ENCODE measurements at regions of chr10 and their contacts with region 1.

Region 1: DNA sequence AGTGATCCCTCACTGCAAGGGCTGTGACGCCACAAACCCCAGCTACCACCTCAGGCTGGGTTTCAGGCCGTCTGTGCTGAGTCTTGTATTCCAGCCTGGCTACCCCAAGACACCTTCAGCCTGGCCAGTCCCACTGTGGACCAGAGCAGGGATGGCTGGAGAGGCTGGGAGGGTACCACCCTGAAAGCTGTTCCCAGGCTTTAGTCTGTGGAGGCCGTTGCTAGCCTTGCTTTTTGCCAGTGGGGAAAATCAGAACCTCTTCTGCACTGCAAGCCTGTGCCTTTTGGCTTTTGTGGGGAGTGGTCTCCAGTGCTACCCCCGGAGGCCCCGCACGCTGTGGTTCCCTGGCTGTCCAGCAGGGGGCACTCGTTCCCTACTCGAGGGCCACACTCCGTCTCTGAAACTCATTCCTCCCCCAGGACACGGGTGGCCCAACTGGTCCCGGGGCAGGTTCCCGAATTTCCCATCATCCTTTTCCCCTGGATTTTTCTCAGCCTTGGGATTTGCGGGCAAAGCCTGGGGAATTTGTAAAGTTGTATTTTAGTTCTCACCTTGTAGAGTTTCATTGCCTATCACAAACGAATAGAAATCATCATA is 128.4 kb upstream of the BTBD16 start:
- DNase-seq: peak; percentile 43
- H3K4me3 ChIP-seq: no peak overlapping the region
- H3K27ac ChIP-seq: peak overlapping the region; percentile 99
- H3K4me1 ChIP-seq: peaks cover 45% of the 10 kb centered on the region
- H3K27me3 ChIP-seq: no peaks in the 10 kb centered on the region
- CTCF ChIP-seq: peak; percentile 87 to 97
- POLR2A ChIP-seq: no peak

Region 2: GRCh38 chr10:121527666-121528065 is 615.1 kb before region 1 on chr10:
- CTCF ChIA-PET with region 1: no interaction called
- POLR2A ChIA-PET with region 1: no interaction called
- dilution Hi-C with region 1: no loop called
- intact Hi-C with region 1: no loop called
- DNase-seq: no peak
- H3K4me3 ChIP-seq: no peak overlapping the region
- H3K27ac ChIP-seq: no peak overlapping the region
- H3K4me1 ChIP-seq: no peaks in the 10 kb centered on the region
- H3K27me3 ChIP-seq: no peaks in the 10 kb centered on the region
- CTCF ChIP-seq: no peak
- POLR2A ChIP-seq: no peak

Region 3: DNA sequence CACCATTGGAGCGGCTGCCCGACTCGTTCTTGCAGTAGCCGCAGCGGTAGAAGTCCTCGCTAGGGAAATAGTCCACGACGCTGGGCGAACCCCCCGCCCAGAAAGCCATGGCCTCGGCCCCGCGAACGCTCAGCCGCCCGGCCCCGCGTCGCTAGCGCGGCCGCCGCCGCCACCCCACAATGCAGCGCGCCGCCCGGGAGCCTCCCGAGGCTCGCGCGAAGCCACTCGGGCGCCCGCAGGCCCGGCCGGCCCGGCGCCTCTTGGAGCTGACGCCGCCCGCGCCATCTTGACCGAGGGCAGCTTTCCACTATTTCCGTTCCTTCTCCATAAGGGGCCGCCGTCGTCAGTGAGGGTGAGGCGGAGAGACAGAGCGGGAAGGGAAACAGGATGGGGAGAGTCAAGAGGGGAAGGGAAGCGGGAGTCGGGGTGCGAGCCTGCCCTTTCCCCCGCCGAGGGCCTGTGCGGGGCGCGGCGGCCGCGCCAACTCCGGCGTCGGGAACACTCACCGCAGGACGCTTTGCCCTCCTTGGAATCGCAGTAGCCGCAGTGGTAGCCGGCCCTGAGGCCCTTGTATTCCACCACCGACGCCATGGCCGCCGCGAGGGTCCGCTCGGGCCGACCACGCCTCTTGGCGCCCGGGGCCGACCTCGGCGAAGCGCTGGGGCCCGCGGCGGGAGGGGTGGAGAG is 214.8 kb before region 1 on chr10 and contains the start of gene ATE1:
- CTCF ChIA-PET with region 1: no interaction called
- POLR2A ChIA-PET with region 1: no interaction called
- dilution Hi-C with region 1: no loop called
- intact Hi-C with region 1: loop called (anchors 1 kb)
- DNase-seq: peak; percentile 94
- H3K4me3 ChIP-seq: peak within 1 kb of the TSS; percentile 61 to 97 (median 93)
- H3K27ac ChIP-seq: peak within 1 kb of the TSS; percentile 91
- H3K4me1 ChIP-seq: peaks cover 11% of the 10 kb centered on the region
- H3K27me3 ChIP-seq: no peaks in the 10 kb centered on the region
- CTCF ChIP-seq: no peak
- POLR2A ChIP-seq: peak; percentile 83
- total RNA-seq, gene ATE1: 19.1 and 27.1 TPM in 2 replicates

Region 4: DNA sequence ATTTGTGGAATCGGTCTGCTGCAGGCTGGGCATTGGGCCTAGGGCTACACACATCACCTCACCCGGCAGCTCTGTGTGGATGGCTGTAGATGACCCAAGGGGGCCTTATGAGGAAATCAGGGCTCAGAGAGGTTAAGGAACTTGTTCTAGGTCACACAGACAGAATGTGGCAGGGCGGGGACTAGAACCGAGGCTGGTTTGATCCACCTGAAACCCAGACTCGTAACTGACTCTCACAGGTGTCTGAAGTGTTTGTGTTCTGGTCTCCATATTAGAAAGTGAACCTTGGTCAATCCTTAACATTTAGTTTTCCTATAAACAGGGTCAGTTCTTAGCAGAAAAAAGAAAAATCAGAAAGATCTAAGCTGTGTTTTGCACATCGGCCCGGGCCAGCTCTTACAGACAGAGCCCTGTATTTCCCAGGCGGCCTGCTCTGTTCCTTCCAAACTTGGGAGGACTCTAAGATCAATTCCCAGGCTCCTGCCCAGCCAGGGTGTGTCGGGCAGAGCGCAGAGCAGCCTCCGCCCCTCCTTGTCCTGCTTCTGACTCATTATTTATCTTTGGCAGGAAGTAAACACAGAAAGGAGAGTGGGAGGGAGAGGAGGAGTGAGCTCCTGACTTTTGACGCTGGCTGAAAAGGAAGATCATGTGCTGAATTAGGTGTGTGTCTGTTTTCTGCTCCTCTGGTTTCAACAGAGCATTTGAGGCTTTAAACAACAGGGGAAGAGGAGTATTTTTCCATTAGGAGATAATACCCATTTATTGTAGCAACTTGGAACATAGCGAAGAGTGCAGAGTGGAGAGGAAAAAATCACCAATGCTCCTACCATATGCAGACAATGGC is 79.7 kb before region 1 on chr10:
- CTCF ChIA-PET with region 1: interaction called, 6 read pairs
- POLR2A ChIA-PET with region 1: no interaction called
- dilution Hi-C with region 1: no loop called
- intact Hi-C with region 1: loop called (anchors 2 kb)
- DNase-seq: peak; percentile 90
- H3K4me3 ChIP-seq: no peak overlapping the region
- H3K27ac ChIP-seq: peak overlapping the region; percentile 14
- H3K4me1 ChIP-seq: peaks cover 8% of the 10 kb centered on the region
- H3K27me3 ChIP-seq: no peaks in the 10 kb centered on the region
- CTCF ChIP-seq: no peak
- POLR2A ChIP-seq: no peak

Region 5: GRCh38 chr10:122163174-122164022 is 20.7 kb after region 1 on chr10:
- CTCF ChIA-PET with region 1: interaction called, 21 read pairs
- POLR2A ChIA-PET with region 1: no interaction called
- dilution Hi-C with region 1: no loop called
- intact Hi-C with region 1: no loop called
- DNase-seq: peak; percentile 49
- H3K4me3 ChIP-seq: peak overlapping the region; percentile 22 to 57 (median 43)
- H3K27ac ChIP-seq: no peak overlapping the region
- H3K4me1 ChIP-seq: peaks cover 8% of the 10 kb centered on the region
- H3K27me3 ChIP-seq: no peaks in the 10 kb centered on the region
- CTCF ChIP-seq: no peak
- POLR2A ChIP-seq: no peak

Region 6: GRCh38 chr10:122267849-122268737 is 125.4 kb after region 1 on chr10:
- CTCF ChIA-PET with region 1: interaction called, 40 read pairs
- POLR2A ChIA-PET with region 1: interaction called, 4 read pairs
- dilution Hi-C with region 1: no loop called
- intact Hi-C with region 1: loop called (anchors 1 kb)
- DNase-seq: peak; percentile 47
- H3K4me3 ChIP-seq: no peak overlapping the region
- H3K27ac ChIP-seq: peak overlapping the region; percentile 74
- H3K4me1 ChIP-seq: peaks cover 20% of the 10 kb centered on the region
- H3K27me3 ChIP-seq: no peaks in the 10 kb centered on the region
- CTCF ChIP-seq: peak; percentile 96 to 97
- POLR2A ChIP-seq: no peak

Region 7: DNA sequence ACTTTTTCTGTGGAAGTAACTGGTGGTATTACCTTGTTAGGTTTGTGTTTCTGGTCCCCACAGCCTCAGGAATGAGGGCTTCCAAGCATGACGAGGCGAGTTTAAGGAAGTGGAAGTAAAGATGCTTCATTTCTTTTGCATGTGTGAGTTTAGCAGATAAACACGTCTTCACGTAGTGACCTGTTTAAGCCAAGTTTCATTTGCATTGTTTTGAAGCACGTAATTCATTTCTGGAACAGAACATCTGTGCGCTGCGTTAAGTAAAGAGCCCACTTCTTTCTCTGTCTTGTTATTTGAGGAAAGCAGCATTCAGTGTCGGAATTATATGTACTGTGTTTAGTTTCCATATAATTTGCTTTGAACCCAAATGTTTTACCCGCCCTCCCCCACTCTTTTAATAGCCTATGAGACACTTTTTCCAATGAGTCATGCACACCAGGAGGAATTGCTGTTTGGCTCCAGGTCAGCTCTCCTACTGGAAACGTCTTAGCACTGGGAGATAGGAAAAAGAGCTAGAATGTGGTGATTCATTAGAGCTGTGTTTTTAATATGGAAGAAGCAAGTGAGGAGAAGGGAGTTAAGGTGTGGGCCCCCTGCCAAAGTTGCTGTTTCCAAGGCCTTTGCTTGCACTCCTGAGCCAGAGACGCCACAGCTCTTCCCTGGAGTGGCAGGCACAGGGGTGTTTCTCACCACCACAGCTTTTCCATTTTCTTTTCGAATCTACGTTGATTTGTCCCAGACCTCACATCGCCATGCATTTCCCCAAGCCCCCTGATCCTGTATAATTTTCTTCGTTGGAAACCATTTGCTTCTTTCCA is 165.1 kb after region 1 on chr10:
- CTCF ChIA-PET with region 1: interaction called, 3 read pairs
- POLR2A ChIA-PET with region 1: no interaction called
- dilution Hi-C with region 1: no loop called
- intact Hi-C with region 1: loop called (anchors 1 kb)
- DNase-seq: peak; percentile 99
- H3K4me3 ChIP-seq: peak overlapping the region in 1 of 3 experiments; percentile 55
- H3K27ac ChIP-seq: peak overlapping the region; percentile 93
- H3K4me1 ChIP-seq: peaks cover 44% of the 10 kb centered on the region
- H3K27me3 ChIP-seq: no peaks in the 10 kb centered on the region
- CTCF ChIP-seq: no peak
- POLR2A ChIP-seq: no peak

Region 8: DNA sequence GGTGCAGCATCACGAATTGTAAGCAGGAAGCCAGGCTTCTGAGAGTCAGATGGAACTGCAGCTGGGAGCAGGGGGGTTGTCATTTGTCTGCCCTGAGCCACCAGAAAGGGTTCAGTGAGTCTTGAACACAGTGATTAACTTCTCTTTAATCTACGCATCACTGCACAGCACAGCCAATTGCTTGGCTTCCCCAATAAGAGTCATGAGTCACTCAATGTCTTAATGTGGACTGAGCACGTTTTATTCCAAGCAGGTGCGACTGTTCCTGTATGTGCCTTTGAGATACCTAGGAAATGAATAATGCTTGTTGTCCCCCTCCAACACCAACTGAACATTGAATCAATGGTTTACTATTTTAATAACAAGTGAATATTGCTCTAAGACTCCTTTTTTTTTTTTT is 205.8 kb after region 1 on chr10:
- CTCF ChIA-PET with region 1: no interaction called
- POLR2A ChIA-PET with region 1: no interaction called
- dilution Hi-C with region 1: no loop called
- intact Hi-C with region 1: no loop called
- DNase-seq: no peak
- H3K4me3 ChIP-seq: no peak overlapping the region
- H3K27ac ChIP-seq: no peak overlapping the region
- H3K4me1 ChIP-seq: no peaks in the 10 kb centered on the region
- H3K27me3 ChIP-seq: peaks cover 0 to 2% of the 10 kb centered on the region in 2 experiments
- CTCF ChIP-seq: no peak
- POLR2A ChIP-seq: no peak

Region 9: DNA sequence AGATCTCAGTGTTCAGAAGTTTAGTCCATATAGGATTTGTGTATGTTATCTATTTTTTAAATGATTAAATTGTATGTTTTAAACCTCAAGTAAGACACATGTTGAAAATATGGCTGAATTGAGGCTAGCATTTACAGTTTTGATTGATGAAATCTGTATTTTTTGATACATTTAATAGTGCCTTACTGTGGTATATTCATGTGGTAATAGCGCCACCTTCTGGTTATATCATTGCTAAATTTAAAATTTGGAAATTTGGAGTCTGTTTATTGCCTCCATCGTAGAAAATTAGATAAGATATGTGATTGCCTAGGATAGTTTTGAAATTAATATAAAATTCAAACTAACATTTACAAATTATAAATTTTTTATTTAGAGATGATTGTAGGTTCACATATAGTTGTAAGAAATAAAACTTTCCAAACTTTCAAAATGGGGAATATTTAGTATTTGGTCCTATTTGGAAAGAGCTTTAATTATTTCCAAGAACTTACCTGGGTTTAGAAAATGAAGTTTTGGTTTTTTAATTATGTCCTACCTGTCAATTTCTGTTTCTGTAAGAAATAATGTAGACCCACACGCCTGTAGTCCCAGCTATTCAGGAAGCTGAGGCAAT is 292.6 kb after region 1 on chr10:
- CTCF ChIA-PET with region 1: interaction called, 8 read pairs
- POLR2A ChIA-PET with region 1: no interaction called
- dilution Hi-C with region 1: no loop called
- intact Hi-C with region 1: loop called (anchors 1 kb)
- DNase-seq: peak; percentile 64
- H3K4me3 ChIP-seq: no peak overlapping the region
- H3K27ac ChIP-seq: no peak overlapping the region
- H3K4me1 ChIP-seq: no peaks in the 10 kb centered on the region
- H3K27me3 ChIP-seq: no peaks in the 10 kb centered on the region
- CTCF ChIP-seq: peak; percentile 8 to 23
- POLR2A ChIP-seq: no peak

Measured in endothelial cell of umbilical vein (primary cell).